ENCODE measurements at regions of chr1 and their contacts with region 1.

Region 1: DNA sequence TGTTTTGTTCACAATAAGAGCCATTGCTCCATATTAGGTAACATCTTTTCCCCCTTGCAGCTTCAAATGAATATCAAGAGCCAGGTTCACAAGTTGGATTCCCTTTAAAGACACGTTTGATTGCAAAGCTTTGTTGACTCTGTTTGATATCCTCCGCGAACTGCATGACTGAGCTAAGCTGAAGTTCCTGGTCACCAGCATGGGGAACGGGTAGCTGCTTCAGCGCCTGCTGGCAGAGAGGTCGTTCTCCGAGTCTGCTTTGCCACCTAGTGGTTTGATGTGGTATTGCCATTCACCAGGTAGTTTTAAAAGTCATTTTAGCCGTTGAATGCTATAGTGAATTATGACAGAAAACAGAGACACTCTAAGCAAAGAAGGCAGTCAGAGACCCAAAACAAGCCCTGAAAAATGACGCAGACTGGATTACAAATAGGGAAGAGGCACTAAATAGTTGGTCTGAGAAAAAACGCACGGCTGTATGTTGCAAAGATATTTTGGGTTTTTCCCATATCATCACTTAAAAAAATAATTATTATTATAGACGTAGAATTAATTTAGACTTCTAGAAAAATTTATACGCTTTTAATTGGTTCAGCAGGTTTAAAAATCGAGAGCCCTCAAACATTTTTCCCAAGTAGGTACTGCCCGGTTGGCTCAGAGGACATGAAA is 193.5 kb upstream of the FMN2 start:
- DNase-seq: peak; percentile 24
- ATAC-seq: peak; percentile 73
- H3K4me3 ChIP-seq: no peak overlapping the region
- H3K27ac ChIP-seq: no peak overlapping the region
- H3K4me1 ChIP-seq: no peaks in the 10 kb centered on the region
- H3K27me3 ChIP-seq: no peaks in the 10 kb centered on the region
- CTCF ChIP-seq: peak; percentile 15 to 79 (median 78); a peak in 4 of 6 replicates
- POLR2A ChIP-seq: no peak
- RAD21 ChIP-seq: peak; percentile 70

Region 2: GRCh38 chr1:238252033-238252802 is 1646.0 kb before region 1 on chr1:
- CTCF ChIA-PET with region 1: no interaction called
- POLR2A ChIA-PET with region 1: no interaction called
- RAD21 ChIA-PET with region 1: no interaction called
- intact Hi-C with region 1: loop called (anchors 5 kb)
- DNase-seq: no peak
- ATAC-seq: no peak
- H3K4me3 ChIP-seq: no peak overlapping the region
- H3K27ac ChIP-seq: no peak overlapping the region
- H3K4me1 ChIP-seq: no peaks in the 10 kb centered on the region
- H3K27me3 ChIP-seq: no peaks in the 10 kb centered on the region
- CTCF ChIP-seq: peak in 1 of 3 experiments; percentile 25; a peak in 1 of 6 replicates
- POLR2A ChIP-seq: no peak
- RAD21 ChIP-seq: no peak

Region 3: GRCh38 chr1:239413916-239414315 is 484.3 kb before region 1 on chr1:
- CTCF ChIA-PET with region 1: no interaction called
- POLR2A ChIA-PET with region 1: no interaction called
- RAD21 ChIA-PET with region 1: no interaction called
- intact Hi-C with region 1: loop called (anchors 5 kb)
- DNase-seq: no peak
- ATAC-seq: no peak
- H3K4me3 ChIP-seq: no peak overlapping the region
- H3K27ac ChIP-seq: no peak overlapping the region
- H3K4me1 ChIP-seq: no peaks in the 10 kb centered on the region
- H3K27me3 ChIP-seq: no peaks in the 10 kb centered on the region
- CTCF ChIP-seq: no peak
- POLR2A ChIP-seq: no peak
- RAD21 ChIP-seq: no peak

Measured in HCT116 (cell line).